ENCODE measurements at regions of chr11 and their contacts with region 1.

Region 1: GRCh38 chr11:57249384-57250319 is 12.6 kb upstream of the APLNR start:
- DNase-seq: peak; percentile 77
- H3K4me3 Mint-ChIP-seq: no peak overlapping the region
- H3K27ac Mint-ChIP-seq: no peak overlapping the region
- H3K4me1 Mint-ChIP-seq: peaks cover 18% of the 10 kb centered on the region
- H3K27me3 Mint-ChIP-seq: no peaks in the 10 kb centered on the region
- CTCF ChIP-seq: peak; percentile 58

Region 2: GRCh38 chr11:56783448-56784041 is 466.1 kb before region 1 on chr11:
- CTCF ChIA-PET with region 1: no interaction called
- intact Hi-C with region 1: loop called (anchors 5 kb)
- DNase-seq: peak; percentile 17
- H3K4me3 Mint-ChIP-seq: no peak overlapping the region
- H3K27ac Mint-ChIP-seq: no peak overlapping the region
- H3K4me1 Mint-ChIP-seq: no peaks in the 10 kb centered on the region
- H3K27me3 Mint-ChIP-seq: no peaks in the 10 kb centered on the region
- CTCF ChIP-seq: peak; percentile 41

Region 3: GRCh38 chr11:56910785-56911184 is 338.9 kb before region 1 on chr11:
- CTCF ChIA-PET with region 1: interaction called, 15 read pairs
- intact Hi-C with region 1: no loop called
- DNase-seq: peak; percentile 32
- H3K4me3 Mint-ChIP-seq: peak overlapping the region; percentile 57
- H3K27ac Mint-ChIP-seq: peak overlapping the region; percentile 97
- H3K4me1 Mint-ChIP-seq: peaks cover 37% of the 10 kb centered on the region
- H3K27me3 Mint-ChIP-seq: no peaks in the 10 kb centered on the region
- CTCF ChIP-seq: no peak

Region 4: DNA sequence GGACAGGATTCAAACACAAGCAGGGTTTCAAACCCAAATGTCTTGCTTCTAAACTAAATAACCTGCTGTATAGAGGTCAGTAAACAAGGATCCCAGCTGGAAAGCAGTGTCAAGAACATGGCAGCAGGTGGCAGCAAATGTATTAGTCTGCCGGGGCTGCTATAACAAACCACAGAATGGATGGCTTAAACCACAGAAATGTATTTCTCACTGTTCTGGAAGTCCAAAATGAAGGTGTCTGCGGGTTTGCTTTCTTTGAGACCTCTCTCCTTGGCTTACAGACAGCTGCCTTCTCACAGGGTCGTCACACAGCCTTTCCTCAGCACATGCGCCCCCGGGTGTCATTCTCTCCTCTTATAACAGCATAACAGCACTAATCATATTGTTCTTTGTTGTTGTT is 133.0 kb before region 1 on chr11:
- CTCF ChIA-PET with region 1: interaction called, 18 read pairs
- intact Hi-C with region 1: loop called (anchors 1 kb)
- DNase-seq: peak; percentile 33
- H3K4me3 Mint-ChIP-seq: no peak overlapping the region
- H3K27ac Mint-ChIP-seq: no peak overlapping the region
- H3K4me1 Mint-ChIP-seq: peaks cover 3% of the 10 kb centered on the region
- H3K27me3 Mint-ChIP-seq: no peaks in the 10 kb centered on the region
- CTCF ChIP-seq: peak; percentile 32

Region 5: DNA sequence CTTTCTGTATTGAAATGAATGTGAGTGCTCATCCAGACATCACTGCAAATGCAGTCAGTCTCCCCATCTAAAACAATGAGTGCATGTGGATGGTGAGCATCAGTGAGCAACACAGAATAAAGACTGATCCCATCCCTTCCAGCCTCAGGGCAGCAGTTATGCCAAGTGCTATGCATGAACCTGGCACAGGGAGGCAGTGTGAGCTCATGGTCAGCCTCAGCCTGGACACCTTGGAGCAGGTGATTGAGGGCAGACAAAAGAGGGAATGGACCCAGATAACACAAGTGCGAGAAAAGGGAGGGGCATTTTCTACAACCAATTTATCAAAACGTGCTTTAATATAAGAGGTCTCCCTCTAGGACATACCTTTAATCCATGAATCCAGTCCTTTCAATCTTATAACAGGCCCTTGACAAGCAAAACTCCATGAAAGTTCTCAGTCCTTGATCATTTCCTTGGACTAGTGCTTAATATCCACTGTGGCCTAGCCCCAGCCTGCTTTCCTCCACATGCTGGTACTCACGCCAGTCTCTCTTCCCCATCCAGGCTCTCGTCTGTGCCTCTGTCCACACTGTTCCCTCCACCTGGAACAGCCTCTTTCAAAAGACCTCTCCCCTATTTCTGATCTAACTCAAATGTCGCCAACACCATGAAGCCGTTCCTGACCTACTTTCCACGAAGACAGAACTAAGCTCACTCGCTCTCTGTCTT is 118.4 kb before region 1 on chr11:
- CTCF ChIA-PET with region 1: interaction called, 40 read pairs
- intact Hi-C with region 1: loop called (anchors 1 kb)
- DNase-seq: peak; percentile 59
- H3K4me3 Mint-ChIP-seq: no peak overlapping the region
- H3K27ac Mint-ChIP-seq: no peak overlapping the region
- H3K4me1 Mint-ChIP-seq: peaks cover 19% of the 10 kb centered on the region
- H3K27me3 Mint-ChIP-seq: no peaks in the 10 kb centered on the region
- CTCF ChIP-seq: peak; percentile 65

Region 6: GRCh38 chr11:57269571-57270021 is 19.9 kb after region 1 on chr11:
- CTCF ChIA-PET with region 1: no interaction called
- intact Hi-C with region 1: no loop called
- DNase-seq: no peak
- H3K4me3 Mint-ChIP-seq: no peak overlapping the region
- H3K27ac Mint-ChIP-seq: no peak overlapping the region
- H3K4me1 Mint-ChIP-seq: peaks cover 1% of the 10 kb centered on the region
- H3K27me3 Mint-ChIP-seq: no peaks in the 10 kb centered on the region
- CTCF ChIP-seq: no peak

Region 7: DNA sequence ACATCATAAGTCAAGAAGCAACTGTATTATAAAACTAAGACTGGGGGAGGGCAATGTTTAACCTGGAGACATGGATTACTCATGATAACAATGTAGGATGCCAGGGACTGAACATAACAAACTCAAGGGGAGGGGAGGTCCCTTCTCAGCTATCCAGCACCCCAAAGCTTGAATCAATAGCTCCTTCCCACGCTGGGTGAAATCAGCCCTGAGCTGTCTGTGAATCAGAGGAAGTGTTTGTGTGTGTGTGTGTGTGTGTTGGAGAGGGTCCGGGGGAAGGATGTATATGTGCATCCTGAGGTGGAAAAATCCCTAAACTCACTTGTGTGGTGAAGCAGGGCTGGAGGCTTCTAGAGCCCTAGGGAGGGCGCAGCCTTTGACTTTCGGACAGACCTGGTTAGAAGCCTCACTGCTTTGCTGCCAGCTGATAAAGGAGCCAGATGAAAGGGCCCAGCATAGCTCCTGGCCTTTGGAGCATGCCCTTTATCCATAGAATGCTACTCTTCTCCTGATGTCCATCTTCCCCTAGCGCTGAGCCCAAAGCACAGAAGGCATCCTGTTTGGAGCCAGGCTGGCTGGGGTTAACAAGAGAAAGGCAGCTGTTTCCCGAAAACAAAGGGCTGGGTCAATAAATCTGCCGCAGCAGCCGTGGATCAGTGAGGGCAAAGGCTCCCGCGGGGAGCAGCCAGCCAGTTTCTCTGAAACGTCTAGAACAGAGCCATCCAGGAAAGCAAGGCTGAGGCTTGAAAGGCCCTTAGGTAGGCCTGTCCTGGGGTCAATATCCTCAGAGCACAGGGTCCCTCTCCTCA is 39.3 kb after region 1 on chr11:
- CTCF ChIA-PET with region 1: no interaction called
- intact Hi-C with region 1: no loop called
- DNase-seq: no peak
- H3K4me3 Mint-ChIP-seq: no peak overlapping the region
- H3K27ac Mint-ChIP-seq: no peak overlapping the region
- H3K4me1 Mint-ChIP-seq: peaks cover 23% of the 10 kb centered on the region
- H3K27me3 Mint-ChIP-seq: no peaks in the 10 kb centered on the region
- CTCF ChIP-seq: no peak

Measured in Calu3 (cell line).